ENCODE measurements at regions of chr16 and their contacts with region 1.

Region 1: GRCh38 chr16:69381231-69381630 is 4.6 kb downstream of the TERF2 start:
- DNase-seq: no peak
- H3K4me3 ChIP-seq: no peak overlapping the region
- H3K27ac ChIP-seq: no peak overlapping the region
- H3K4me1 ChIP-seq: peaks cover 12% of the 10 kb centered on the region
- H3K27me3 ChIP-seq: no peaks in the 10 kb centered on the region
- CTCF ChIP-seq: no peak

Region 2: DNA sequence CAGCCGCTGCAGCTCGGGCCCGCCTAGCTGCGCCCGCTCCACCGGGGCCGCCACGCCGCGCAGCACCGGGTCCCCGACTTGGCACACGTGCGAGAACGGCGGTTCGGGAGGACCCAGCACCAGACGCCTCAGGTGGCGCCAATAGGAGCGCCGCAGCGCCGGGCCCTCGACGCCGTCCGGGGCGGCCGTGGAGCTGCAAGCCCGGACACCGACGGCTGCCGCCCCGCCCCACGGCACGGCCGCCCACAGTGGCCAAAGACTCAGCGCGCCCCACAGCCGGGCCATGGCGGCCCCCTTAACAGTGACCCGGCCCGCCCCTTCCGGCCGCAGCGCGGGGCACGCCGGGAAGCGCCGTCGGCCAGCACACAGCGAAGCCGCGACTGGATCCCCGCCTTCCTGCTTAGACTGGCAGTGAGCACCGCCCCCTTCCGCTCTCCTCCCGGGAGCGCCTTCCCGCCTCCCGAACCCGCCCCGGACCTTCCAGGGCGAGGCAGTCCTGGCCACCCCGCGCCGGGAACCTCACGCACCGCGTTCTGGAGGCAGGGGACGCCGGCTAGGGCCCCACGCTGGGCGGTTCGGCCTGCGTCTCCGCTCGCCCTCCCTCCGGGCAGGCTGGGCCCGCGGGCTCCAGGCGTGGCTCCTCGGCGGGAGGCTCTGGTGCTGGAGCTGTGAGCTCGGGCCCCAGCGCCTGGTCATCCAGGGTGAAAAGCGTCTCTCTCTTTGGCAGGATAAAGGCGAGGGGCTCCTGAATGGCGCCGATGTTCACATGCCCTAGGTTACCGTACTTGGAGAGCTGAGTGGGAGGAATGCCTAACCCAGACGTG is 50.7 kb before region 1 on chr16 and contains the start of gene PDF:
- CTCF ChIA-PET with region 1: interaction called, 3 read pairs
- POLR2A ChIA-PET with region 1: interaction called, 14 read pairs
- intact Hi-C with region 1: no loop called
- DNase-seq: peak; percentile 97
- H3K4me3 ChIP-seq: peak within 1 kb of the TSS; percentile 69
- H3K27ac ChIP-seq: peak within 1 kb of the TSS; percentile 91
- H3K4me1 ChIP-seq: peaks cover 18% of the 10 kb centered on the region
- H3K27me3 ChIP-seq: no peaks in the 10 kb centered on the region
- CTCF ChIP-seq: no peak
- total RNA-seq, gene PDF: 24.8 and 32.4 TPM in 2 replicates

Measured in A673 (cell line).